Motor neuron (in vitro differentiated cells): ENCODE measurements at regions of chr1 and their contacts with region 1.

Region 1: DNA sequence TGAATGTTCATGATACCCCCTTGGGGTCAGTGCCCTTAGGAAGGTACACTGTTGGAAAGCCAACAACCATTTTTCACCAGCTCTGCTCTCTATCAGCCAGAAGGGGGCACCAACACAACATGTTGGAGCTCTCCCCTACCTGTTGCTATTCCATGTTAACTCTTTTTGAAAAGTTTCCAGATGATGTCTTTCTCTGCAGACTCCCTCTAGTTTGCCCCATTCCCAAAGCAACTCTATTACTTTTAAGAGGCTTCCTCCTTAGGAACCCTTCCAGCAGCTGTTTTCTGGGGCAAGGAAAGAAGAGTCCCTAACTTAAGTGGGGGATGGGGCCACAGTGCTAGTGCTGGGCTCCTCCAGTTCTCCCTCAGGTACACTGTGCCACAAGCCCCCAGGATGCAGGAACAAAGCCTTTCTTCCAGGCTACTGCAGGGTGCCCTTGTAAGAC is 22.9 kb upstream of the NDC1 start:
- ATAC-seq: peak in 7 of 8 experiments; percentile 27 to 88 (median 75)
- H3K4me3 ChIP-seq: no peak overlapping the region
- H3K27ac ChIP-seq: no peak overlapping the region
- H3K4me1 ChIP-seq: peaks cover 0 to 7% of the 10 kb centered on the region in 2 donors

Region 2: GRCh38 chr1:53959664-53960250 is 98.8 kb after region 1 on chr1:
- in situ Hi-C with region 1: loop called in 3 of 9 experiments (anchors 10 to 25 kb)
- ATAC-seq: no peak
- H3K4me3 ChIP-seq: no peak overlapping the region
- H3K27ac ChIP-seq: no peak overlapping the region
- H3K4me1 ChIP-seq: peaks cover 0 to 3% of the 10 kb centered on the region in 2 donors

Region 3: GRCh38 chr1:54848134-54848948 is 987.4 kb after region 1 on chr1:
- in situ Hi-C with region 1: loop called in 1 of 9 experiments (anchors 25 kb)
- ATAC-seq: no peak
- H3K4me3 ChIP-seq: no peak overlapping the region
- H3K27ac ChIP-seq: no peak overlapping the region
- H3K4me1 ChIP-seq: no peaks in the 10 kb centered on the region